Activated CD8-positive, alpha-beta T cell treated with anti-CD3 and anti-CD28 coated beads, Interleukin-2, amount 10 ng/mL, durations not matched to agents 7 days and 5 days (primary cell): ENCODE measurements at regions of chr10 and their contacts with region 1.

Region 1: DNA sequence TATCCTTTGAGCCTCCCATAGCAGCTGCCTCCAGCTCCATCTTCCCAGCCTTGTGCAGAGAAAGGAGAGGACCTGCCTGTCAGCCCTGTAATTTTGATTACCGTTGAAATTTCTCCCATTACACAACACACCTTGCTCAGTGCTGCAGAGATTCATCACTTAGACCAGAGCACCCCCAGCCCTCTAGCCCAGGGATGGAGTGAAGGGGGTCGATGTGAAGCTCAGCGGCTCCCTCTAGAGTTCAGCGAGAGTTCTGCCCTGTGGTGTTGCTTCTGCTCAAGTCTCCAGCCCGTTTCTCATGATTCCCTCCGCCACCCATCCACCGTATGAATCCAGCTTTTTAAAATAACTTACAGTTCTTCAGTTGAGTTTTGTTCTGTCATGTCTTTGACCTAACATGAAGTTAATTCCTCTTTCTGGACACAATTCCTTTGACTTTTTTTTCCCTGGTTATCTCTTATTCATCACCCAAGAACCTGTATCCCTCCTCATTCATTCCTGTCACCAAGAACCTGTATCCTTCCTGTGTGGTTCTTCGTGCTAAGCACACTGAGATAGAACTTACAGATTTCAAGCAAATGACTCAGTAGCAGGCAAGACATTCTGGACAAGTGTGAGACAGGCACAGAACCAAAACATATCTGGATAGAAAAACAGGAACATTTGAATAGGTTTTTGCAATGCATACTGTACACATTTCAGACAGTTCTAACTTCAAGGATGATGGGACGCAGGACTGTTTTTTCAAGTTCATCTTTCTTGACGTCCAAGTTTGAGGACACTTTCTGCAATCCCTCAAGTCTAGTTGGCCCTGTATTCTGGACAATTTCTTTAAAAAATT is 35.0 kb upstream of the ZNF32 start:
- DNase-seq: peak; percentile 44
- ATAC-seq: peak; percentile 65
- H3K4me3 Mint-ChIP-seq: no peak overlapping the region
- H3K27ac Mint-ChIP-seq: no peak overlapping the region
- H3K4me1 Mint-ChIP-seq: no peaks in the 10 kb centered on the region
- H3K27me3 Mint-ChIP-seq: peaks cover 24% of the 10 kb centered on the region

Region 2: GRCh38 chr10:43669386-43669785 is 14.3 kb before region 1 on chr10:
- CTCF ChIA-PET with region 1: interaction called, 12 read pairs
- POLR2A ChIA-PET with region 1: no interaction called
- DNase-seq: no peak
- ATAC-seq: no peak
- H3K4me3 Mint-ChIP-seq: no peak overlapping the region
- H3K27ac Mint-ChIP-seq: no peak overlapping the region
- H3K4me1 Mint-ChIP-seq: peaks cover 12% of the 10 kb centered on the region
- H3K27me3 Mint-ChIP-seq: peaks cover 24% of the 10 kb centered on the region

Region 3: GRCh38 chr10:43878386-43878785 is 194.7 kb after region 1 on chr10:
- CTCF ChIA-PET with region 1: no interaction called
- POLR2A ChIA-PET with region 1: no interaction called
- DNase-seq: no peak
- ATAC-seq: no peak
- H3K4me3 Mint-ChIP-seq: no peak overlapping the region
- H3K27ac Mint-ChIP-seq: no peak overlapping the region
- H3K4me1 Mint-ChIP-seq: peaks cover 8% of the 10 kb centered on the region
- H3K27me3 Mint-ChIP-seq: peaks cover 7% of the 10 kb centered on the region